ENCODE measurements at regions of chr9 and their contacts with region 1.

Region 1: DNA sequence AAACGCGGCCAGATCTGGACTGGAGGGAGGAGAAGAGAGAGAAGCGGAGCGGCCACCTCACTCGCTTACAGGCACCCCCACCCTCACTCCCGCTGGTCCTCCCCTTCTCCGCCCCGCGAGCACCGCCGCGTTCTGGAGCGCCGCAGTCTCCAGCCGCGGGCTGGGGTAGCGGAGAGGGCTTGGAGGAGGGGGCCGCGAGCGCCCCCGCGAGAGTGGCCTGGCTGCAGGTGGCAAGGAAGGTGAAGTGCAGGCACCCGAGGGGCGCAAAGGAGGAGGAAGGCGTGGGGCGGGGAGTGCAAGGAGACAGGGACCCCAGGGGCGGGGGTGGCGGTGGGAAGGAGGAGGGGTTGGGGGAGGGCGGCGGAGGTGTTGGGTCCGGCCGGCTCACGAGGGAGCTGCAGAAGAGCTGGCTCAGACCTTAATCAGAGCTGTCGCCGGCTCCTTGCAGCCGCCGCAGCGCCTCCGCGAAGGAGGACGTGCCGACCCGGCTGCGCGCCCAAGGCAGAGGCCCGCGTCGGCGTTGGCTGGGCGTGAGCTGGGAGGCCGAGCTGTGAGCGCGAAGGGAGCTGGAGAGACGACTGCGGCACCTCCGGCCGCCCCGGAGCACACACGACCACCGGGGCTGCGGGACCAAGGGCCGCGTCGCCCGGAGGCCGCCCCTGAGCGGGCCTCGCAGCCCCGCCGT is at the start of gene DMRT3:
- DNase-seq: no peak
- ATAC-seq: no peak
- H3K4me3 Mint-ChIP-seq: no peak within 1 kb of the TSS
- H3K27ac Mint-ChIP-seq: no peak within 1 kb of the TSS
- H3K4me1 Mint-ChIP-seq: peaks cover 5% of the 10 kb centered on the region
- H3K27me3 Mint-ChIP-seq: peaks cover 70% of the 10 kb centered on the region
- CTCF ChIP-seq: no peak
- total RNA-seq, gene DMRT3: not detected

Region 2: GRCh38 chr9:841371-842209 is 134.8 kb before region 1 on chr9 and contains the start of gene DMRT1:
- CTCF ChIA-PET with region 1: no interaction called
- POLR2A ChIA-PET with region 1: interaction called, 4 read pairs
- intact Hi-C with region 1: loop called (anchors 10 kb)
- DNase-seq: peak; percentile 12
- ATAC-seq: no peak
- H3K4me3 Mint-ChIP-seq: no peak within 1 kb of the TSS
- H3K27ac Mint-ChIP-seq: no peak within 1 kb of the TSS
- H3K4me1 Mint-ChIP-seq: peaks cover 11% of the 10 kb centered on the region
- H3K27me3 Mint-ChIP-seq: peaks cover 47% of the 10 kb centered on the region
- CTCF ChIP-seq: no peak
- total RNA-seq, gene DMRT1: not detected

Region 3: DNA sequence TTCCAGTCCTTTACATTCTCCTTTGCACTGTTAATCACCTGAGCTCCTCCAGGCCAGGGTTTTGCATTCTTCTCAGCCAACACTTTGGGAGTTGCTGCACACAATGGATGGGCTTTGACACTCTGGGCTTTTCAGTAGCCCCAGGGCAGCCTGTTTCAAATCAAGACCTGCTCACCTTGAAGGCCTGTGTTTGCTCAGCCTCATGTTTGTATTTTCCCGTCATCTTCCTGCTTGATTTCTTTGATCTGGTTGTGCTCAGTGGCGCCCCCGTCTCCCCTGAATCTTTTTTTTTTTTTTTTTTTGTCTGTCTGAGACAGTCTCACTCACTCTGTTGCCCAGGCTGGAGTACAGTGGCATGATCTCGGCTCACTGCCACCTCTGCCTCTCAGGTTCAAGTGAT is 93.9 kb before region 1 on chr9:
- CTCF ChIA-PET with region 1: no interaction called
- POLR2A ChIA-PET with region 1: no interaction called
- intact Hi-C with region 1: no loop called
- DNase-seq: peak; percentile 8
- ATAC-seq: no peak
- H3K4me3 Mint-ChIP-seq: no peak overlapping the region
- H3K27ac Mint-ChIP-seq: no peak overlapping the region
- H3K4me1 Mint-ChIP-seq: peaks cover 12% of the 10 kb centered on the region
- H3K27me3 Mint-ChIP-seq: peaks cover 33% of the 10 kb centered on the region
- CTCF ChIP-seq: no peak

Region 4: DNA sequence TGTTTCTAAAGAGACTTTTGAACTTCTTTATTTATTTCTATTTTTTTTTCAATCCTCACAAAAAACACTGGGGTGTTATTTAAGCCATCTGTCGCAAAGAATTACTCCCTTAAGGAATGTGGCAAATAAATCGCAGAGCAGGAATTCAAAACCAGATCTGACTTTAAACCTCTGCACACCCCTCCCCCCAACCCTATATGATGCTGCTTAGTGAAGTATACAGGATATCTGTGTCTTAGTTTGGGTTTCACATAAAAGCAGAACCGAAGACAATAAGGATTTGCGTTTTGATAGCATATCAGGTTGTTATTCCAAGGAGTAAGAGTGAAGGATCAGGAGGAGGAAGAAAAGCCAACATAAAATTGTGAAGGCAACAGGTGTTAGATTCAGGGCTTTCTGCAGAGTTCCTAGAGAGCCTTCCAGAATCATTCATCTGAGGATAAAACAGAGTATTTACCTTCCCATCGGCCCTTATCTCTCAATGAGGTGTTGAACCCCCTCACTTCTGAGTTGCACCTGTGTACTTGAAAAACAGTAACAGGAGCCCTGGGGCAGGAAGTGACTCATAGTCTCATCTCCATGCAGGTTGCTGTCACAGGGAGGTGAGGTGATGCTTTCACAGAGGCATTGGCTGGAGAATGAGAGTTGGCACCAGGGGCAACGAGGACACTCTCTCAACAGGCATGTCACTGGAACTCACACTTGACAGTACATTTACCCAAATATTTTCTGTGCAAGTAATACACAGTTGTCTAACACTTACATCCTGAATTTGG is 33.4 kb before region 1 on chr9:
- CTCF ChIA-PET with region 1: no interaction called
- POLR2A ChIA-PET with region 1: no interaction called
- intact Hi-C with region 1: no loop called
- DNase-seq: peak; percentile 4
- ATAC-seq: no peak
- H3K4me3 Mint-ChIP-seq: no peak overlapping the region
- H3K27ac Mint-ChIP-seq: no peak overlapping the region
- H3K4me1 Mint-ChIP-seq: no peaks in the 10 kb centered on the region
- H3K27me3 Mint-ChIP-seq: peaks cover 32% of the 10 kb centered on the region
- CTCF ChIP-seq: no peak

Region 5: DNA sequence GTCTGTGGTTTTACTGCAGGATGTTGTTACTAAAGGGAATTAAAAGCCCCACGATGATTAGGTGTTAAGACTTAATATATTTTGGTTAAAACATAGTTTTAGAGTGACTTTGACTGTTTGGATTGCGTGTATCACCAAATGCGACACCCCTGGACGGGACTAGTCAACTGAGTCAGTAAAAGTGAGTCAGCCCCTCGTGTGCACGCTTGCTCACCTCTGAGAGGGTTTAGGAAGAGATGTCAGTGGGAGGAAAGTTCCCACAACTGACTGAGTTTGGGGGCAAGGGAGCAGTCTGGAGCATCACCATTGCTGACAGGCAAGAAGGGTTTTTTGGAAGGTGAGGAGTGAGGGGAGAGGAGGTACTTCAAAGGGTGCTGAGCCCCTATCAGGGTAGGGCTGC is 14.4 kb before region 1 on chr9:
- CTCF ChIA-PET with region 1: no interaction called
- POLR2A ChIA-PET with region 1: no interaction called
- intact Hi-C with region 1: no loop called
- DNase-seq: no peak
- ATAC-seq: no peak
- H3K4me3 Mint-ChIP-seq: no peak overlapping the region
- H3K27ac Mint-ChIP-seq: no peak overlapping the region
- H3K4me1 Mint-ChIP-seq: no peaks in the 10 kb centered on the region
- H3K27me3 Mint-ChIP-seq: peaks cover 48% of the 10 kb centered on the region
- CTCF ChIP-seq: no peak